ENCODE measurements at regions of chr5 and their contacts with region 1.

Region 1: DNA sequence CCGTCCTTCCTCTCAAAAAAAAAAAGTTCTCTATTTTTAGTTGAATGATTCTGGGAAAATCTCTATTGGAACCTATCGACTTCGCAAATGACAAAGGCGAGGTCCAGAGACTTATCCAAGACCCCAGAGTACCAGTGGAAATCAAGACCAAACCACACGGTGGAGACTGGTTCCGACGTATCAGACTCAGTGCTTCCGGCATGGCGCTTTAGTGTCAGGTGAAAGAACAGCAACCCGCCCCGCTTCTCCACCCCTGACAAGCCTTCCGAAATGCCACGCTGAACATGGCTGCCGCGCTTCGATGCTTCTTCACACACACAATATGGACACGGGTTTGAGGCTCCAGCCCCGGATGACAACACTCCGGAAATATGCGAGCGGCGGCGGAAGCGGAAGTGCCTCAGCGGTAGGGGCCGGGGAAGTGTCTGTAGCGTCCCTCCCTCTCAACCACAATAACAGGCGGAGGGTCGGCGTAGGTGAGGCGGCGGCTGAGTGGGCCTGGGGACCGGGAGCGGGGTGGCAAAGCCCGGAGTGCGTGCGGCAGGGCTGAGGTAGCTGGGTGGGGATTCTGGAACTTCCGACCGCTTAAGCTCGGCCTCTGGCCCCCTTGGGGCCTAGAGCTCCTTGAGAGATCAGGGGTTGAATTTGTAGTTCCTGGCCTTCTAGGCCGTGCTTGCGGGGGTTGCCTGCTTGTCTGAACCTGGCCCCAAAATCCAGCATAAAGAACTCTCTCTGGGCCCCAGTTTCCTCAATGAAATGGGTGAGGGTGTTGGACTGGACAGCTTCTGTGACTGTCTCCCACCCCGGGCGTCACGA is at the start of gene FBXO38:
- DNase-seq: peak; percentile 97
- ATAC-seq: peak; percentile 99
- H3K4me3 ChIP-seq: peak within 1 kb of the TSS; percentile 73 to 92 (median 80)
- H3K27ac ChIP-seq: peak within 1 kb of the TSS; percentile 85
- H3K4me1 ChIP-seq: peaks cover 43% of the 10 kb centered on the region
- H3K27me3 ChIP-seq: no peaks in the 10 kb centered on the region
- CTCF ChIP-seq: peak; percentile 54
- EP300 ChIP-seq: peak in 1 of 2 experiments; percentile 46; a peak in 1 of 4 replicates
- POLR2A ChIP-seq: peak; percentile 80 to 82
- RAD21 ChIP-seq: 0 out of 2 replicates have a peak, but pooled peaks have one; percentile 10
- total RNA-seq, gene FBXO38: 35.6 and 35.9 TPM in 2 replicates

Region 2: GRCh38 chr5:148145916-148146315 is 237.9 kb before region 1 on chr5:
- CTCF ChIA-PET with region 1: no interaction called
- POLR2A ChIA-PET with region 1: no interaction called
- in situ Hi-C with region 1: no loop called
- intact Hi-C with region 1: loop called (anchors 10 kb)
- DNase-seq: peak; percentile 77
- ATAC-seq: peak; percentile 83
- H3K4me3 ChIP-seq: no peak overlapping the region
- H3K27ac ChIP-seq: no peak overlapping the region
- H3K4me1 ChIP-seq: peaks cover 35% of the 10 kb centered on the region
- H3K27me3 ChIP-seq: no peaks in the 10 kb centered on the region
- CTCF ChIP-seq: no peak
- EP300 ChIP-seq: peak in 1 of 2 experiments; percentile 60; a peak in 2 of 4 replicates
- POLR2A ChIP-seq: no peak
- RAD21 ChIP-seq: no peak

Region 3: DNA sequence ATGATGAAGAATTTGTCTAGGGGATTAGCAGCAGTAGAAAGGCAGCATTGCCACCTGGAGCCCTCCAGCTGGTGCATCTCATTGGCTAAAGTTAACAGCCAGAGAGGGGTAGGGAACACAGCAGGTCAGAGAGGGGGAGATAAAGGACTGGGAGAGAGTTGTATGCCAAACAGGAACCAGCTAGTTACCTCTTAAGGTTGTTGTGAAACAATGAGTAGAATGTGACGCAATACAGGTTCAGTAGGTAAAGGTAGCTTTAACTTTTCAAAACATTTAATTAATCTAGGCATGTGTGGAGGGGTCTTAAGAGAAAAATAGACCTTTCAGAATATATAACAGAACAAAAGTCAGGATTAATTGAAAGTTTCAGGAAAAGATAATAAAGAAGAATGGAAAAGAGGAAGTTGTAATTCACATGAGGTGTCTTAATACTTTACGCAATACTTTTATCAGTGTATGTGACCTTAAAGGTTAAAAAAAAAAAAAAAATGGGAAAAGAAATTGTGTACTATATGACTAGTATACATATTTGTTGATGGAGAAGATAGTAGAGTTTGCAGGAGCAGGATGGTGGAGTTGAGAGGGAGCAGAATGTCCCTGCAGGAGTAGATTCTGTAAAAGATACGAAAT is 14.3 kb after region 1 on chr5:
- CTCF ChIA-PET with region 1: interaction called, 4 read pairs
- POLR2A ChIA-PET with region 1: interaction called, 30 read pairs
- in situ Hi-C with region 1: no loop called
- intact Hi-C with region 1: loop called (anchors 1 kb)
- DNase-seq: peak; percentile 58
- ATAC-seq: peak; percentile 54
- H3K4me3 ChIP-seq: no peak overlapping the region
- H3K27ac ChIP-seq: no peak overlapping the region
- H3K4me1 ChIP-seq: peaks cover 60% of the 10 kb centered on the region
- H3K27me3 ChIP-seq: no peaks in the 10 kb centered on the region
- CTCF ChIP-seq: peak; percentile 16; the same call in 1 of the 2 replicates
- EP300 ChIP-seq: no peak; a peak in 1 of 4 replicates
- POLR2A ChIP-seq: no peak
- RAD21 ChIP-seq: no peak

Region 4: DNA sequence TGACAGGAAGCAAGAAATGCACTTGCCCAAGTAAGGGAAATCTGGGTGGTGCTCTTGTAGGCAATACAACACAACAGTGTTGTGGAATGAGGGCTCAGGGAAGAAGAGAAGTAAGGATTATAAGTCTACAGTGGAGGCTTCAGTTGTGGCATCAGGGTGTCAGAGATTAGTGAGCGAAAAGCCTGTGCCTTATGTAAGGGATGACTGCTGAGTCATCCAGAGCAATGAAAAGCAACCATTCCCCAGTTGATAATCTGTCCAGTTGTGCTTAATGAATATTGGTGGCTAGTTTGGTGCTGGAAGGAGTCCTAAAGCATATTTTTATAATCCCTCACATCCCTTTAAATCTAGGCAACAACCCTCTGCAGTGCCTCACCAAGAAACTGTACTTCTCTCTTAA is 42.0 kb after region 1 on chr5:
- CTCF ChIA-PET with region 1: no interaction called
- POLR2A ChIA-PET with region 1: no interaction called
- in situ Hi-C with region 1: no loop called
- intact Hi-C with region 1: no loop called
- DNase-seq: no peak
- ATAC-seq: no peak
- H3K4me3 ChIP-seq: no peak overlapping the region
- H3K27ac ChIP-seq: no peak overlapping the region
- H3K4me1 ChIP-seq: no peaks in the 10 kb centered on the region
- H3K27me3 ChIP-seq: no peaks in the 10 kb centered on the region
- CTCF ChIP-seq: no peak
- EP300 ChIP-seq: no peak
- POLR2A ChIP-seq: no peak
- RAD21 ChIP-seq: no peak